ENCODE measurements at regions of chr1 and their contacts with region 1.

Region 1: DNA sequence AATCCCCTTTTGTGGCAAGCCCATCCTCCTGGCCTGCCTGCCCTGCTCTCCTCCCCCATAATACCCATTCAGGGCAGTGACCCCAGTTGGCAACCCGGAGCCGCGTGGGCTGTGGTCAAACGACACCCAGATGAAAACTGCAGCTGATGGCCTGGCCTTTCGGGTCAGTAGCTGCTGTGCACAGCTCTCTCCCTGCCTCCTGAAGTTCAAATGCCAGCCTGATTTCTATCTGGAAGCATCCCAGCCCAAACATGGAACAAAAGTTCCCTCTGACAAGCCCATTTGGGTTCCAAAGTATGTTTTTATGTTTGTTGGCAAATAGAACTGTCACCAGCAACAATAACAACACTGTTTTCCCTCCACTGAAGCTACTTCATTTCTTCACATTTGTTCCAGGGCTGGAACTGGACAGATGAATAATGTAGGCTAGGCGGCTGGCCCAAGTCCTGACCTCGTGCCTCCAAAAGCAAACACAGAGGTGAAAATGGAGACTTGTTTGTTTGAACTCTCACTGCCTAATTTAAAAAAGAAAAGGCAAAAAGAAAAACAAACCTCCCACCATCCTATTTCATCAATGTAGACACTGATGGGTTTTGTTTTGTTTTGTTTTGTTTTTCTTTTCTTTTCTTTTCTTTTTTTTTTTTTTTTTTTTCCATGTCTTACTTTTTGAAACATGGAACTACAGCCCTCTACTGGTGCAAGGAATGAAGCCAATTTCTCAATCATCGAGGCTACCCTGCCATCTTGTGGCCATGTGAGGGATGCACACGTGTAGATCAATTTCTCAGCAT is 179.0 kb downstream of the ADSS2 start:
- DNase-seq: peak; percentile 69
- ATAC-seq: peak; percentile 94
- H3K4me3 ChIP-seq: no peak overlapping the region
- H3K27ac ChIP-seq: no peak overlapping the region
- H3K4me1 ChIP-seq: no peaks in the 10 kb centered on the region
- H3K27me3 ChIP-seq: no peaks in the 10 kb centered on the region
- CTCF ChIP-seq: peak; percentile 88 to 99 (median 99); a peak in 5 of 6 replicates
- EP300 ChIP-seq: no peak
- POLR2A ChIP-seq: no peak
- RAD21 ChIP-seq: peak; percentile 100

Region 2: DNA sequence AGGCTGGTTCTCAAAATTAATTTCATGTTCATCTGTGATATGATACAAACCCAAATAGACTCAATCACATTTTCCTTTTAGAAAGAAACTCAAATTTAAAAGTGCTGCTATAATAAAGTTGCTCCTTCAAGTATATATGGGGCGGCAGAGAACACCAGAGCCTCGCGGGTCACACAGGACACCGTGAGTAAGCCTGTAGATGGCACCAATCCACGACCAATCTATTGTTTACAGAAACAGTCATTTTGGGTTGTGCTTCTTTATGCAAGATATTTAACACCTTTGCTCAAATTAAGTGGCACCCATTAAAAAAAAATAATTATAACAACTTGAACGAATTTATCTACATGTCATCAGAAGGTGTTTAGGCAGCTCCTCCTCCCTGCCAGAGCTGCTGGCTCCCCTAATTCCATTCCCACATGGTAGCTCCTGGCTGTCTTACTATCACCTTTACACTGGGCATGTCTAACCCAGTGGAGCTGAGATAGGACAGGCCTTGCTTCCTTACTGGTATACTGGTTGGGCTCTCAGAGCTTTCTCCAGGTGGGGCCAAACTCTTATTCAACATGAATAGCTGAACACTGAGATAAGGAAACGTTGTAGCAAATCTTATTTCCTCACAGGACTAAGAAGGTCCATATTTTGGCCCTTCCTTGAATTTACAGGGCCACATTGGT is 729.8 kb before region 1 on chr1:
- CTCF ChIA-PET with region 1: no interaction called
- POLR2A ChIA-PET with region 1: no interaction called
- RAD21 ChIA-PET with region 1: no interaction called
- SMC1A ChIA-PET with region 1: no interaction called
- in situ Hi-C with region 1: no loop called
- intact Hi-C with region 1: loop called (anchors 2 kb)
- DNase-seq: no peak
- ATAC-seq: no peak
- H3K4me3 ChIP-seq: no peak overlapping the region
- H3K27ac ChIP-seq: no peak overlapping the region
- H3K4me1 ChIP-seq: no peaks in the 10 kb centered on the region
- H3K27me3 ChIP-seq: no peaks in the 10 kb centered on the region
- CTCF ChIP-seq: no peak
- EP300 ChIP-seq: no peak
- POLR2A ChIP-seq: no peak
- RAD21 ChIP-seq: no peak

Region 3: DNA sequence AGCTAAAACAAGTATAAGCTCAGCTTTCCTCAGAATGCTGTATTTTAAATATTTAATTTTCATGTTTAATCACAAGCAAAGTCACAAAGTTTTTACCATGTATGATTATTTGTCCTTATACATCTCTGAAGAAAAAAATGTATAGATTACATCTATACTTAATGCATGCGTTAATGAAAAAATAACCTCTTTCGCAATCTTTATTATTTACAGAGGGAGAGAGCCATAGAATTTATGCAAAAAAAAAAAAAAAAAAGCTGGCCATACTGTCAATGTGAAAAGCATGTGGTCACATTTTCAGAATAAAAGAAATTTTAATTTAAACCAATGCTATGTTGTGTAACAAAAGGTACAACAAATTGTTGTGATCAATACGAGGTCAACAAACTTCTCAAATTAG is 570.8 kb before region 1 on chr1:
- CTCF ChIA-PET with region 1: no interaction called
- POLR2A ChIA-PET with region 1: no interaction called
- RAD21 ChIA-PET with region 1: no interaction called
- SMC1A ChIA-PET with region 1: no interaction called
- in situ Hi-C with region 1: loop called (anchors 5 kb)
- intact Hi-C with region 1: no loop called
- DNase-seq: no peak
- ATAC-seq: no peak
- H3K4me3 ChIP-seq: no peak overlapping the region
- H3K27ac ChIP-seq: no peak overlapping the region
- H3K4me1 ChIP-seq: no peaks in the 10 kb centered on the region
- H3K27me3 ChIP-seq: no peaks in the 10 kb centered on the region
- CTCF ChIP-seq: no peak
- EP300 ChIP-seq: no peak
- POLR2A ChIP-seq: no peak
- RAD21 ChIP-seq: no peak

Region 4: GRCh38 chr1:243708210-243708609 is 564.5 kb before region 1 on chr1:
- CTCF ChIA-PET with region 1: interaction called, 6 read pairs
- POLR2A ChIA-PET with region 1: no interaction called
- RAD21 ChIA-PET with region 1: interaction called, 5 read pairs
- SMC1A ChIA-PET with region 1: interaction called, 25 read pairs
- in situ Hi-C with region 1: loop called (anchors 5 kb)
- intact Hi-C with region 1: loop called (anchors 1 kb)
- DNase-seq: no peak
- ATAC-seq: no peak
- H3K4me3 ChIP-seq: no peak overlapping the region
- H3K27ac ChIP-seq: no peak overlapping the region
- H3K4me1 ChIP-seq: no peaks in the 10 kb centered on the region
- H3K27me3 ChIP-seq: no peaks in the 10 kb centered on the region
- CTCF ChIP-seq: peak in 1 of 3 experiments; percentile 28; a peak in 2 of 6 replicates
- EP300 ChIP-seq: no peak
- POLR2A ChIP-seq: no peak
- RAD21 ChIP-seq: peak; percentile 57

Region 5: GRCh38 chr1:244218220-244218619 is 54.4 kb before region 1 on chr1:
- CTCF ChIA-PET with region 1: no interaction called
- POLR2A ChIA-PET with region 1: no interaction called
- RAD21 ChIA-PET with region 1: no interaction called
- SMC1A ChIA-PET with region 1: no interaction called
- in situ Hi-C with region 1: no loop called
- intact Hi-C with region 1: no loop called
- DNase-seq: no peak
- ATAC-seq: no peak
- H3K4me3 ChIP-seq: no peak overlapping the region
- H3K27ac ChIP-seq: no peak overlapping the region
- H3K4me1 ChIP-seq: no peaks in the 10 kb centered on the region
- H3K27me3 ChIP-seq: peaks cover 1 to 7% of the 10 kb centered on the region in 2 experiments; a peak in 3 of 4 replicates
- CTCF ChIP-seq: no peak
- EP300 ChIP-seq: no peak
- POLR2A ChIP-seq: no peak
- RAD21 ChIP-seq: no peak

Region 6: GRCh38 chr1:244302889-244303613 is 30.4 kb after region 1 on chr1:
- CTCF ChIA-PET with region 1: interaction called, 6 read pairs
- POLR2A ChIA-PET with region 1: no interaction called
- RAD21 ChIA-PET with region 1: interaction called, 6 read pairs
- SMC1A ChIA-PET with region 1: interaction called, 10 read pairs
- in situ Hi-C with region 1: no loop called
- intact Hi-C with region 1: loop called (anchors 1 kb)
- DNase-seq: no peak
- ATAC-seq: no peak
- H3K4me3 ChIP-seq: no peak overlapping the region
- H3K27ac ChIP-seq: no peak overlapping the region
- H3K4me1 ChIP-seq: peaks cover 3% of the 10 kb centered on the region
- H3K27me3 ChIP-seq: no peaks in the 10 kb centered on the region
- CTCF ChIP-seq: no peak
- EP300 ChIP-seq: no peak
- POLR2A ChIP-seq: no peak
- RAD21 ChIP-seq: no peak